Endothelial cell of umbilical vein (primary cell): ENCODE measurements at regions of chr17 and their contacts with region 1.

Region 1: DNA sequence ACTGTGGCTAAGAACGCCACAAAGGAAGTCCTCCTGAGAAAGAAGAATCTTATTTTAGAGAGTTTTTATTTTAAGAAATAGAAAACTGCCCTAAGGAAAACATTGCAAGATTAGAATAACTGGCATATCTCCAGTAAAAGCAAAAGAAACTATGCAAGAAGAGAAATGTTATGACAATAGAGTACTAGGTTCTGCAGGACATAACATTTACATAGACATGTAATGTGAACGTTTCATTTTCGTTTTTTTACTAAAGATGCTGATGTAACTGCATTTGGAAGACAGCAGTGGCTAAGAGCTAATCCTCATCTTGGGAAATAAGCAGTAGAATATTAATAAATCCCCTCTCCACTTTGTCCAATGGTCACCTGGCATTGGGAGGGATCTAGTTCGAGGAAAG is 7.8 kb upstream of the ASGR2 start:
- DNase-seq: peak; percentile 54
- H3K4me3 ChIP-seq: peak overlapping the region in 1 of 3 experiments; percentile 8
- H3K27ac ChIP-seq: no peak overlapping the region
- H3K4me1 ChIP-seq: peaks cover 8% of the 10 kb centered on the region
- H3K27me3 ChIP-seq: peaks cover 0 to 9% of the 10 kb centered on the region in 2 experiments
- CTCF ChIP-seq: no peak
- POLR2A ChIP-seq: no peak

Region 2: GRCh38 chr17:7239091-7240027 is 117.0 kb after region 1 on chr17 and contains the start of gene PHF23:
- CTCF ChIA-PET with region 1: no interaction called
- POLR2A ChIA-PET with region 1: no interaction called
- dilution Hi-C with region 1: no loop called
- intact Hi-C with region 1: no loop called
- DNase-seq: peak; percentile 100
- H3K4me3 ChIP-seq: peak within 1 kb of the TSS; percentile 71 to 96 (median 83)
- H3K27ac ChIP-seq: peak within 1 kb of the TSS; percentile 14
- H3K4me1 ChIP-seq: peaks cover 35% of the 10 kb centered on the region
- H3K27me3 ChIP-seq: no peaks in the 10 kb centered on the region
- CTCF ChIP-seq: no peak
- POLR2A ChIP-seq: peak; percentile 51
- total RNA-seq, gene PHF23: 54.7 and 56.2 TPM in 2 replicates

Region 3: GRCh38 chr17:8337802-8338752 is 1215.7 kb after region 1 on chr17:
- CTCF ChIA-PET with region 1: no interaction called
- POLR2A ChIA-PET with region 1: no interaction called
- dilution Hi-C with region 1: no loop called
- intact Hi-C with region 1: loop called (anchors 10 kb)
- DNase-seq: no peak
- H3K4me3 ChIP-seq: no peak overlapping the region
- H3K27ac ChIP-seq: no peak overlapping the region
- H3K4me1 ChIP-seq: no peaks in the 10 kb centered on the region
- H3K27me3 ChIP-seq: peaks cover 0 to 1% of the 10 kb centered on the region in 2 experiments
- CTCF ChIP-seq: no peak
- POLR2A ChIP-seq: no peak